Heart left ventricle (tissue), 16 donors: ENCODE measurements at regions of chr15 and their contacts with region 1.

Region 1: GRCh38 chr15:28885630-28886430 is at the start of gene APBA2:
- DNase-seq: no peak
- ATAC-seq: peak in 1 of 4 donors; percentile 20
- H3K4me3 ChIP-seq: peak within 1 kb of the TSS; percentile 17 to 61 (median 44)
- H3K27ac ChIP-seq: no peak within 1 kb of the TSS
- H3K4me1 ChIP-seq: peaks cover 0 to 16% (median 2%) of the 10 kb centered on the region in 12 donors
- H3K27me3 ChIP-seq: peaks cover 11 to 36% (median 21%) of the 10 kb centered on the region in 9 donors
- CTCF ChIP-seq: no peak
- POLR2A ChIP-seq: no peak
- total RNA-seq, gene APBA2: 0.16 to 1.3 (median 0.85) TPM in 7 of 9 donors, not detected in the others

Region 2: DNA sequence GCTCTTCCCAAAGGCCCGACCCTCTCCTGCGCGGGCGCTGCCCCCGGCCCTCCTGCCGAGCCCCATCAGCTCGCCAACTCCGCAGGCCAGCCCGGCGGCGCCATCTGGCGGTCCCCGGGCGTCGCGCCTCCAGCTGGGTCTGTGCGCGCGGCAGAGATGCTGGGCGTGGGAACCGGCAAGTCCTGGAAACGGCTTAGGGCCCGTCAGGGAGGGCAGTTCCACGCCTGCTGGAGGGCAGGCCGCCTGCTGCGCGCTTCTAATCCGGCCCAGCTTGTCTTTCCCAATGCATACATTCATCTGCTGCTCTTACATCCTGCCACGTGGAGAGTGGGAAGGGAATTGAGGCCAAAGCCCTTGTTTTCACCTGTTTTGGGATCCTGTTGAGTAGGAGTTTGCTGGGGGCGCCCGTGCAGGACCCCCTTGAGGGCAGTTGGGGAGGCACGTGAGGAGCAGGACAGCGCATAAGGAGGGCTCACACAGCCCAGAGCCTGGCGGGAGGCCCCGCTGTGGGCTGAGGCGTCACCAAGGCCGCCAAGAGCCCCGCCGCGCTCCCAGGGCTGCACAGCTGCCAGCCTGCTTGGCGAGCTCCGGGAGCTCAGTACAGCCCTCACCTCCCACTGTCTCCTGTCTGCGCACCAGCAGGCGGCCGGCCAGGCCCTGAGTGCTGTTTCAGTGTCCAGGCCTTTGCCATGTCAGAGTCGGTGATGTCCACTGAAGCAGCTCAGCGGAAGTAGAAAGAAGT is 218.2 kb after region 1 on chr15:
- intact Hi-C with region 1: loop called in 3 of 10 experiments (anchors 5 to 10 kb)
- DNase-seq: peak; percentile 64 to 85 (median 74)
- ATAC-seq: peak; percentile 50 to 98 (median 86)
- H3K4me3 ChIP-seq: peak overlapping the region; percentile 22 to 62 (median 46)
- H3K27ac ChIP-seq: peak overlapping the region in 4 of 12 donors; percentile 11 to 48 (median 34)
- H3K4me1 ChIP-seq: peaks cover 0 to 12% (median 4%) of the 10 kb centered on the region in 12 donors
- H3K27me3 ChIP-seq: no peaks in the 10 kb centered on the region
- CTCF ChIP-seq: peak; percentile 66 to 93 (median 84)
- POLR2A ChIP-seq: no peak

Region 3: GRCh38 chr15:29149738-29150075 is 263.9 kb after region 1 on chr15:
- intact Hi-C with region 1: no loop called
- DNase-seq: no peak
- ATAC-seq: no peak
- H3K4me3 ChIP-seq: no peak overlapping the region
- H3K27ac ChIP-seq: no peak overlapping the region
- H3K4me1 ChIP-seq: no peaks in the 10 kb centered on the region
- H3K27me3 ChIP-seq: no peaks in the 10 kb centered on the region
- CTCF ChIP-seq: no peak
- POLR2A ChIP-seq: no peak